B cell (primary cell): ENCODE measurements at regions of chr15 and their contacts with region 1.

Region 1: DNA sequence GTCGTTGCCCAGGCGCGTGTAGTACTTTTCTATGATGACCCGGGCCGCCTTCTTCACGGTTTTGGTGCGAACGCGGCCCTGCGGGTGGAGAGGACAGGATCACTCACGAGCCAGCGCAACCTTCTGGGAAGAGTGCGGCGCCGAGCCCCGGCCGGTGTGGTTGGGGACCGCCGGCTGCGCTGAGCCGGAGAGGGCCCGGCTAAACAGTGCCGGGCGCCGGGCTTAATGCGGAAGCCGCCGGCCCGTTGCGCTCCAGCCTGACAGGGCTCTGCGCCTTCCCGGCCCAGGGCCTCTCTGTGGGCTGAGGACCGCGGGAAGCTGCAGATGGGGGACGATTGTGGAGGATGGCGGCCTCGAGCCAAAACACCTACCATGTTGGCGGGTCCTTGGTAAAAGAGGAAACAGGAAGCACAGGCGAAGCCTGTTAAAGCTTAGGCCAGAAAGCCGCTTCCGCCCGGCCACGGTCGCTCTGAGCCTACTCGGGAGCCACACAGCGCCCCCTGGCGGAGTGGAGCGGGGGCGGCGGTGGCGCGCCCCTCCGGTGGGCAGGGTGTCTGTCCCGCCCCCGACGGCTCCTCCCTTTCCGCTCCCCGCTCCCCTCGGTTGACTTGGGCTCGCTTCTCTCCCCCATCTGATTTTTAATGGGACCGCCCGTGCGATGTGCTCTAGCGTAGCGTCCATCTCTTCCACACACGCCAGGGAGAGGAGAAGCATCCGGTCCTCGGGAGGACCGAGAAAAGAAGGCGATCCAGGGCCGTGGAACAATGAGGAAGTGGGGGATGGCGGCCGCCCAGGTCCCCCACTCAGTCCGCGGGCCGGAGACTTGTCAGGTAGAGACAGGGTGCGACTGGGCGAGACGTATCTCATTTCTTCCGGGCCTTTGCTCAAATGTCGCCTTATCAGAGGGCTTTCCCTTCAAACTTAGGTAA is at the start of gene RPS17:
- DNase-seq: peak; percentile 97
- ATAC-seq: peak; percentile 95
- H3K4me3 ChIP-seq: peak within 1 kb of the TSS; percentile 66 to 93 (median 84)
- H3K4me3 Mint-ChIP-seq: peak within 1 kb of the TSS; percentile 99
- H3K27ac ChIP-seq: peak within 1 kb of the TSS; percentile 72 to 85
- H3K27ac Mint-ChIP-seq: peak within 1 kb of the TSS; percentile 98
- H3K4me1 ChIP-seq: peaks cover 10 to 23% of the 10 kb centered on the region in 2 donors
- H3K4me1 Mint-ChIP-seq: peaks cover 22% of the 10 kb centered on the region
- H3K27me3 ChIP-seq: peaks cover 0 to 8% (median 0%) of the 10 kb centered on the region in 4 experiments
- H3K27me3 Mint-ChIP-seq: peaks cover 4% of the 10 kb centered on the region
- CTCF ChIP-seq: peak; percentile 96
- total RNA-seq, gene RPS17: 2,214 and 2,297 TPM in 2 replicates

Region 2: DNA sequence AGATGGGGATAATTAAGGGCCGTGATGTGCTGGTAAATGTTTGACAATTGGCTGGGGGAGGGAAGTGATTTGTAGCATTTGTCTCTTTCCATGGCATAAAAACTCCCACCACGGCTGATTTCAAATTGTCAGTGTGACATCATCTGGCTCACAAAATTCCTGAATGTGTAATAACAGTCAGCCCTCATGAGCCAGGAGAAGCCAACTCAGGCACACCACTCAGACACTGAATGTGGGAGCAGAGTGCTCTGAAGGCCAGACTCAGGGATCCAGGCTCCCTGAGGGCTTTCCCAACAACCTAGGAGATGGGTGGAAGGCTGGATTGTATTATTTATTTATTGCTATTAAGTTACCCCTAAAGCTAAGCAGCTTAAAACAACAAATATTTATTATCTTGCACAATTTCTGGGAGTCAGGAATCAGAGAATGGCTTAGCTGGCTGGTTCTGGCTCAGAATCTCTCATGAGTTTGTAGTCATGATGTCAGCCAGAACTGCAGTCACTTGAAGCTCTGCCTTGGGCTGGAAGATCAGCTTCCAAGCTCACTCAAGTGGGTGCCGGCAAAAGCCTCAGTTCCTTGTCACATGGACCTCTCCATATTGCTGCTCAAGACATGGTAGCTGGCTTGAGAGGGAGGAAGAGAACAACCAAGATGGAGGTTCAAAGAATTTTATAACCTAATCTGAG is 113.3 kb after region 1 on chr15:
- CTCF ChIA-PET with region 1: no interaction called
- POLR2A ChIA-PET with region 1: no interaction called
- intact Hi-C with region 1: no loop called
- DNase-seq: no peak
- ATAC-seq: no peak
- H3K4me3 ChIP-seq: no peak overlapping the region
- H3K4me3 Mint-ChIP-seq: no peak overlapping the region
- H3K27ac ChIP-seq: no peak overlapping the region
- H3K27ac Mint-ChIP-seq: no peak overlapping the region
- H3K4me1 ChIP-seq: no peaks in the 10 kb centered on the region
- H3K4me1 Mint-ChIP-seq: peaks cover 3% of the 10 kb centered on the region
- H3K27me3 ChIP-seq: peaks cover 0 to 21% (median 2%) of the 10 kb centered on the region in 4 experiments
- H3K27me3 Mint-ChIP-seq: peaks cover 45% of the 10 kb centered on the region
- CTCF ChIP-seq: no peak

Region 3: DNA sequence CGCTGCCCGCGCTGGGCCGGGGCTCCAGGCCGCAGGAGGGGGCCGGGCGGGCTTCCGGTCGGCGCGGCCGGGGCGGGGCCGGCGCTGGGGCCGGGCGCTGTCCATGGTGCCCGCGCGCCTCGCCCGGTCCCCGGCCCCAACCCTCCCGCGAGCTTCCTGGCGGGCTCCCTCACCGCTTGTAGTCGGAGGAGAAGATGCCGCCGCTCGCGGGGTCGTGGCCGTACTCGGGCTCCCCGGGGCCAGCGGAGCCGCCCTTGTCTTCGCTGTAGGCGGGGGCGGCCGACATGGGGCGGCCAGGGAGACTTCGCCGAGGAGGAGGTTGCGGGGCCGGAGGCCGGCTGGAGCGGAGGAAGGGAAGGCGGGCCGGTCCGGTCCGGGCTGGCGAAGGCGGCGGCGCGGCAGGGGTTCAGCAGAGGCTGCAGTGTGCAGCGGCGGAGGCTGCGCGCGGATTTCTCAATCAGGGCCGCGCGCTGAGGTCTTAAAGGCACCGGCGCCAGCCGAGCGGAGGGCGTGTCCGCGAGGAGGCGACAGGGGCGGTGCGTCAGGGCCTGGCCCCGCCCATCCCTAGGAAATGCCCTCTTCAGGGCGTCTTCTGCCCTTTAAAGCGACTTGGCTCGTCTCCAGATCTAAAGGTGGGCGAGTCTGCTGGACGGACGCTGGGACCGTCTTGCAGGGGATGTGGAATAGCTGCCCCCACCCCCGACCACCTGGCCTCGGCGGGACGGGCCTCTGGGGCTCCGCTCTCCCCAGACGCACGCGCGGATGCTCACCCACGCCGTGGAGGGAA is 169.3 kb after region 1 on chr15 and contains the start of gene AP3B2:
- CTCF ChIA-PET with region 1: no interaction called
- POLR2A ChIA-PET with region 1: no interaction called
- intact Hi-C with region 1: loop called (anchors 1 kb)
- DNase-seq: peak; percentile 78
- ATAC-seq: peak; percentile 88
- H3K4me3 ChIP-seq: peak within 1 kb of the TSS in 4 of 5 experiments; percentile 38 to 72 (median 60)
- H3K4me3 Mint-ChIP-seq: peak within 1 kb of the TSS; percentile 77
- H3K27ac ChIP-seq: no peak within 1 kb of the TSS
- H3K27ac Mint-ChIP-seq: no peak within 1 kb of the TSS
- H3K4me1 ChIP-seq: peaks cover 0 to 12% of the 10 kb centered on the region in 2 donors
- H3K4me1 Mint-ChIP-seq: peaks cover 2% of the 10 kb centered on the region
- H3K27me3 ChIP-seq: peaks cover 0 to 45% (median 5%) of the 10 kb centered on the region in 4 experiments
- H3K27me3 Mint-ChIP-seq: peaks cover 30% of the 10 kb centered on the region
- CTCF ChIP-seq: no peak
- total RNA-seq, gene AP3B2: 0.15 and 0.61 TPM in 2 replicates

Region 4: GRCh38 chr15:82849556-82850512 is 309.5 kb after region 1 on chr15:
- CTCF ChIA-PET with region 1: no interaction called
- POLR2A ChIA-PET with region 1: no interaction called
- intact Hi-C with region 1: loop called (anchors 2 kb)
- DNase-seq: peak; percentile 72
- ATAC-seq: peak; percentile 22
- H3K4me3 ChIP-seq: no peak overlapping the region
- H3K4me3 Mint-ChIP-seq: peak overlapping the region; percentile 52
- H3K27ac ChIP-seq: no peak overlapping the region
- H3K27ac Mint-ChIP-seq: peak overlapping the region; percentile 66
- H3K4me1 ChIP-seq: peaks cover 6 to 23% of the 10 kb centered on the region in 2 donors
- H3K4me1 Mint-ChIP-seq: peaks cover 31% of the 10 kb centered on the region
- H3K27me3 ChIP-seq: no peaks in the 10 kb centered on the region
- H3K27me3 Mint-ChIP-seq: no peaks in the 10 kb centered on the region
- CTCF ChIP-seq: peak; percentile 73

Region 5: GRCh38 chr15:82999905-83000671 is 459.8 kb after region 1 on chr15:
- CTCF ChIA-PET with region 1: interaction called, 20 read pairs
- POLR2A ChIA-PET with region 1: no interaction called
- intact Hi-C with region 1: loop called (anchors 2 kb)
- DNase-seq: peak; percentile 68
- ATAC-seq: peak; percentile 83
- H3K4me3 ChIP-seq: peak overlapping the region in 3 of 5 experiments; percentile 29 to 44 (median 40)
- H3K4me3 Mint-ChIP-seq: peak overlapping the region; percentile 88
- H3K27ac ChIP-seq: peak overlapping the region in 1 of 2 donors; percentile 62
- H3K27ac Mint-ChIP-seq: peak overlapping the region; percentile 91
- H3K4me1 ChIP-seq: peaks cover 6 to 8% of the 10 kb centered on the region in 2 donors
- H3K4me1 Mint-ChIP-seq: peaks cover 7% of the 10 kb centered on the region
- H3K27me3 ChIP-seq: no peaks in the 10 kb centered on the region
- H3K27me3 Mint-ChIP-seq: no peaks in the 10 kb centered on the region
- CTCF ChIP-seq: peak; percentile 72

Region 6: DNA sequence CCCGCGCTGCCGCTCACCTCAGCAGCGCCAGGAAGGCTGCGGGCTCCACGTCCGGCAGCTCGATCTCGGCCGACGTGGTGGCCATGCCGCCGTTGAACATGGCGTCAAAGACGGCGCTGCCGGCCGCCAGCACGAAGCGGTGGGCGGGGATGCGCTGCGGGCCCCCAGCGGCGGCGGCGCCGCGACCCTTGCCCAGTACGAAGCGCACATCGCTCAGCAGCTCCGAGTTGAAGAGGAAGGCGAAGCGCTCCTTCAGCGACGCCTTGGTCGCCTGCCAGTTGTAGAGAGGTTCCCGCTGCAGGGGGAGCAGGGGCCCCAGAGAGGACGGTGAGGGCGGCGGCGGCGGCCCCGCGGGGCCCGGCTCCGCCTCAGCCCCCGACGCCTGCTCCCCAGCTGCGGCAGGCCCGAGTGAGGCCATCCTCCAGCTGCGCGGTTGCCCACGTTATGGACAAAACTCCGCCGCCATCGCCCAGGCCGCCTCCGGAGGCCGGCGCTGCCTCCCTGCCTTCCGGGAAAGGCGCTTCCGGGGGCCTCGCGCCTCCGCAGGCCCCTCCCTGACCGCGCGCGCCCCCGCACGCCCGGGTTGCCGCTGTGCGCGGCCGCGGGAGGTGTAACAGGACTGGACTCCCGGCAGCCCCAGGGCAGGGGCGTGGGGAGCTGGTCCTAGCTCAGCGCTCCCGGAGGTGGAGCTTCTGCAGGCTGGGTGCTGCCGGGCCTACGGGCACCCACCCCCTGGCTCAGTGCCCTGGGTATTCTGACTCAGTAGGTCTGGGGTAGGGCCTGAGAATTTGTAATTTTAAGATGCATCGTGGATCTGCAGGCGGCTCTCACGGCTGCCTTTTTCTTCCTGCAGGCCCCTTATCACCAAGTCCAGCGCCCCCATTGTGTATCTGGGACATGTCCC is 526.7 kb after region 1 on chr15 and contains the start of gene BTBD1:
- CTCF ChIA-PET with region 1: interaction called, 4 read pairs
- POLR2A ChIA-PET with region 1: interaction called, 7 read pairs
- intact Hi-C with region 1: loop called (anchors 1 kb)
- DNase-seq: peak; percentile 89
- ATAC-seq: peak; percentile 93
- H3K4me3 ChIP-seq: peak within 1 kb of the TSS; percentile 54 to 87 (median 83)
- H3K4me3 Mint-ChIP-seq: peak within 1 kb of the TSS; percentile 79
- H3K27ac ChIP-seq: peak within 1 kb of the TSS; percentile 31 to 84
- H3K27ac Mint-ChIP-seq: peak within 1 kb of the TSS; percentile 80
- H3K4me1 ChIP-seq: peaks cover 39 to 41% of the 10 kb centered on the region in 2 donors
- H3K4me1 Mint-ChIP-seq: peaks cover 10% of the 10 kb centered on the region
- H3K27me3 ChIP-seq: no peaks in the 10 kb centered on the region
- H3K27me3 Mint-ChIP-seq: no peaks in the 10 kb centered on the region
- CTCF ChIP-seq: no peak
- total RNA-seq, gene BTBD1: 47.5 and 54.6 TPM in 2 replicates

Region 7: DNA sequence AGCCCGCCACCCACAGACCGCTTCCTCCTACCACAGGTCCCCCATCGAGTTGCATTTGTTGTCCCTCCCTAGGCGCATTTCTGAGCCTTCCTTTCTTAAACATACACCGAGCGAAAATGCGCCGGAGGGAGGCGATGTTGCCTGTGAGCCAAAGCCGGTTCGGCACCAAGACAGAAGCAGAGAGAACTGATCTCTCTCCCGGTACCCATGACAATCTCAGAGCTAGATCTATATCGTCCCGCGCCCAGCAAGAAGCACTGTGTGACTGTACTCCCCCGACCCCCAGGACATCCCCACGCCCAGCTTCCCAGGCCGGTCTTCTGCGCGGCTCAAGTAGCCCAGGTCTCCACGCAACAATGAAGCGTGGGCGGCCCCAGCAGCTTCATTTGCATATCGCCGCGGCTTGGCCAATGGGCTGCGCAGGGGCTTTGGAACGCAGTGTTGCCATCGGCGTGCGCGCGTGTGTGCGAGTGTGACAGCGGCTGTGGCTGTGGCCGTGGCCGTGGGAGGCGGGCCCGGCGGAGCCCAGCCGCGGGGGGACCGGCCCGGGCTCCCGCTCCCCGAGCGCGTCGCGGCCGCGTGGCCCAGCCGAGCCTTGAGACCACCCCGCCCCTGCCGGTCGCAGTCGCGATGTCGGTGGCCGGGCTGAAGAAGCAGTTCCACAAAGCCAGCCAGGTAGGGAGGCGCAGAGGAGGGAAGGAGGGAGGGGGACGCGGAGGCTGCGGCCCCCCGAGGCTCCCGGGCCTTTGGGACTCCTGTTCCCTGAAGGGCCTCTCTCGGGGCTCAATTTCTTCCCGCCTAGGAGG is 906.8 kb after region 1 on chr15 and contains the start of gene SH3GL3:
- CTCF ChIA-PET with region 1: no interaction called
- POLR2A ChIA-PET with region 1: no interaction called
- intact Hi-C with region 1: no loop called
- DNase-seq: no peak
- ATAC-seq: no peak
- H3K4me3 ChIP-seq: no peak within 1 kb of the TSS
- H3K4me3 Mint-ChIP-seq: peak within 1 kb of the TSS; percentile 68
- H3K27ac ChIP-seq: no peak within 1 kb of the TSS
- H3K27ac Mint-ChIP-seq: no peak within 1 kb of the TSS
- H3K4me1 ChIP-seq: peaks cover 0 to 6% of the 10 kb centered on the region in 2 donors
- H3K4me1 Mint-ChIP-seq: peaks cover 9% of the 10 kb centered on the region
- H3K27me3 ChIP-seq: peaks cover 0 to 31% (median 6%) of the 10 kb centered on the region in 4 experiments
- H3K27me3 Mint-ChIP-seq: peaks cover 53% of the 10 kb centered on the region
- CTCF ChIP-seq: no peak
- total RNA-seq, gene SH3GL3: not detected in 2 replicates